Head of caudate nucleus (tissue), 42 donors: ENCODE measurements at regions of chr17 and their contacts with region 1.

Region 1: GRCh38 chr17:30344283-30345088 is 10.6 kb upstream of the TMIGD1 start:
- DNase-seq: peak; percentile 11 to 83 (median 60)

Region 2: GRCh38 chr17:30378824-30379302 is 34.4 kb after region 1 on chr17 and contains the start of gene CPD:
- intact Hi-C with region 1: loop called (anchors 5 kb)
- DNase-seq: peak; percentile 95 to 100 (median 99)

Region 3: GRCh38 chr17:30493780-30494179 is 149.3 kb after region 1 on chr17:
- intact Hi-C with region 1: no loop called
- DNase-seq: no peak

Region 4: GRCh38 chr17:30565073-30565935 is 220.8 kb after region 1 on chr17:
- intact Hi-C with region 1: no loop called
- DNase-seq: peak in 2 of 42 donors; percentile 23 to 24